PC-9 (cell line): ENCODE measurements at regions of chr16 and their contacts with region 1.

Region 1: GRCh38 chr16:68510775-68511174 is 28.3 kb upstream of the ZFP90 start:
- DNase-seq: no peak
- H3K4me3 ChIP-seq: no peak overlapping the region
- H3K27ac ChIP-seq: no peak overlapping the region
- H3K4me1 ChIP-seq: no peaks in the 10 kb centered on the region
- H3K27me3 ChIP-seq: no peaks in the 10 kb centered on the region
- CTCF ChIP-seq: no peak

Region 2: DNA sequence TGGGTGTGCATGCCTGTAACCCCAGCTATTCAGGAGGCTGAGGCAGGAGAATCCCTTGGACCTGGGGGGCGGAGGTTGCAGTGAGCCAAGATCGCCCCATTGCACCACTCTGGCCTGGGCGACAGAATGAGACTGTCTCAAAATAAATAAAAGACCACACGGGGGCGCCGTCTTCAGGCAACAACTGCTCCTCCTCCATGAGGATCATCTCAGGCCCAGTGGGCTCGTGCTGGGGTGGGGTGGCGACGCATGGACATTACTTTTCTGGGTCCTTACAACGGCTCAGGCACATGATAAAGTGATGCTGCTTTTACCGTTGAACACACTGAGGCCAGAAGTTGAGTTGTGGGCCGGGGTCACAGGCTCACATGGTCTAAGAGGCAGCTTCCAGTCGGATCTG is 143.7 kb before region 1 on chr16:
- CTCF ChIA-PET with region 1: no interaction called
- POLR2A ChIA-PET with region 1: no interaction called
- intact Hi-C with region 1: loop called (anchors 1 kb)
- DNase-seq: peak in 1 of 2 experiments; percentile 30
- H3K4me3 ChIP-seq: no peak overlapping the region
- H3K27ac ChIP-seq: no peak overlapping the region
- H3K4me1 ChIP-seq: no peaks in the 10 kb centered on the region
- H3K27me3 ChIP-seq: no peaks in the 10 kb centered on the region
- CTCF ChIP-seq: peak; percentile 57

Region 3: GRCh38 chr16:68396481-68396880 is 114.3 kb before region 1 on chr16:
- CTCF ChIA-PET with region 1: interaction called, 5 read pairs
- POLR2A ChIA-PET with region 1: interaction called, 3 read pairs
- intact Hi-C with region 1: loop called (anchors 1 kb)
- DNase-seq: peak in 1 of 2 experiments; percentile 43
- H3K4me3 ChIP-seq: no peak overlapping the region
- H3K27ac ChIP-seq: no peak overlapping the region
- H3K4me1 ChIP-seq: no peaks in the 10 kb centered on the region
- H3K27me3 ChIP-seq: no peaks in the 10 kb centered on the region
- CTCF ChIP-seq: peak; percentile 66